ENCODE measurements at regions of chr7 and their contacts with region 1.

Region 1: GRCh38 chr7:87152107-87152844 is at the start of gene DMTF1:
- H3K4me3 Mint-ChIP-seq: peak within 1 kb of the TSS; percentile 98
- H3K27ac Mint-ChIP-seq: peak within 1 kb of the TSS; percentile 100
- H3K4me1 Mint-ChIP-seq: peaks cover 18% of the 10 kb centered on the region
- H3K27me3 Mint-ChIP-seq: no peaks in the 10 kb centered on the region

Region 2: DNA sequence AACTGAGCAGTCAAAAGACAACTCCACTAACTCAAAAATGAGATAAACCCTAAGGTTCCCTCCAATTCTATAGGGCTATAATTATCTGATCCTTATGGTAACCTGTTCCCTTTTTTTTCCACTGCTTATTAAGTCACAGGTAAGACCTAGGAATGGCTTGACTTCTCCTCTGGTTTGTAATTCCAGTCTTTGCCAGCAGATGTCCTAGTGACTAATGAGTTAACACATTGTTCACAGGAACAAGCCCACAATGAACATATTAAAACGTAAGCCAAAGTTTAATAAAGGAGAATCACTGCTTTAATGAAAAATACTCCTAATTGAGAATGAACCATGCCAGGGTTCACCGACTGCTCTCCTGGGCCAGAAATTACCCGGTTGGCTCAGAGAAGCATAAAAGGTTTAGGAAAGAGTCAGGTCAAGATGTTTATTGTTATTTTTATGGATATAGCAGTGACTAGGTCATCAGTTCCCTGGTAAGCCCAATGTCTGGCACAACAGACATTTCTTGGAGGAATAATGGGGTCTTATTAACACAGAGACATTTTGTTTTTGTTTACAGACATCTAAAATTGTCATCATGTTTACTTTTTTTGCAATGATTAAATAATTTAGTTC is 213.0 kb before region 1 on chr7:
- intact Hi-C with region 1: loop called (anchors 1 kb)
- H3K4me3 Mint-ChIP-seq: no peak overlapping the region
- H3K27ac Mint-ChIP-seq: no peak overlapping the region
- H3K4me1 Mint-ChIP-seq: no peaks in the 10 kb centered on the region
- H3K27me3 Mint-ChIP-seq: no peaks in the 10 kb centered on the region

Region 3: GRCh38 chr7:87219545-87220025 is 67.3 kb after region 1 on chr7 and contains the start of gene TMEM243:
- intact Hi-C with region 1: loop called (anchors 1 kb)
- H3K4me3 Mint-ChIP-seq: peak within 1 kb of the TSS; percentile 90
- H3K27ac Mint-ChIP-seq: peak within 1 kb of the TSS; percentile 94
- H3K4me1 Mint-ChIP-seq: peaks cover 30% of the 10 kb centered on the region
- H3K27me3 Mint-ChIP-seq: peaks cover 11% of the 10 kb centered on the region

Region 4: GRCh38 chr7:87345166-87345927 is 193.1 kb after region 1 on chr7 and contains the start of gene CROT:
- intact Hi-C with region 1: loop called (anchors 10 kb)
- H3K4me3 Mint-ChIP-seq: peak within 1 kb of the TSS; percentile 89
- H3K27ac Mint-ChIP-seq: peak within 1 kb of the TSS; percentile 92
- H3K4me1 Mint-ChIP-seq: peaks cover 13% of the 10 kb centered on the region
- H3K27me3 Mint-ChIP-seq: no peaks in the 10 kb centered on the region

Region 5: DNA sequence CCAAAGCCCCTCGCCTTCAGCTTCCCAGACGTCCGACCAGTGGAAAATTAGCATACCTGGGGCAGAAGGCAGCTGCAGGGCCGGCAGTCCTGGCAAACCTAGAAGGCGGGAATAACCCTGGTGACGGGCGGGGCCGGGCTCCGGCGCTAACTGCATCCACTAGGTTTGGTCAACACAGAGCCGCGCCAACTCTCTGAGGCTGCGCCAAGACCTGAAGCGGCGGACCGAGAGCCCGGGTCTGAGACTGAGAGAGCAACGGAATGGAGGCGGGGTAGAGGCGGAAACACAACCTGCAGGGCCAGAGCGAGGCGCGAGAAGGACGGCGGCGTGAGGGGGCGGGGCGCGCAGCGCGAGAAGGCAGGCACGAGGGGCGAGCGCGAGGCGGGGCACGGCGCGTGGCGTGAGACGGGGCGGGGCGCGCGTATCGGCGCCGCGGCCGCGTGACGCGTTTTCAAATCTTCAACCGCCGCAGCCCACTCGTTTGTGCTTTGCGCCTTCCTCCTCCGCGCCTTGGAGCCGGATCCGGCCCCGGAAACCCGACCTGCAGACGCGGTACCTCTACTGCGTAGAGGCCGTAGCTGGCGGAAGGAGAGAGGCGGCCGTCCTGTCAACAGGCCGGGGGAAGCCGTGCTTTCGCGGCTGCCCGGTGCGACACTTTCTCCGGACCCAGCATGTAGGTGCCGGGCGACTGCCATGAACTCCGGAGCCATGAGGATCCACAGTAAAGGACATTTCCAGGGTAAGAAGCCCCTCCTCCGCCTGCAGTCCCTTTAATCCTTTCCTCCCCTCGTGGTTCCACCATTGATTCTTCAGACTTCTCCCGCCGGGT is 724.0 kb after region 1 on chr7 and contains the starts of genes DBF4 and SLC25A40:
- intact Hi-C with region 1: loop called (anchors 5 kb)
- H3K4me3 Mint-ChIP-seq: peak within 1 kb of the TSS; percentile 96
- H3K27ac Mint-ChIP-seq: peak within 1 kb of the TSS; percentile 100
- H3K4me1 Mint-ChIP-seq: peaks cover 41% of the 10 kb centered on the region
- H3K27me3 Mint-ChIP-seq: no peaks in the 10 kb centered on the region

Region 6: DNA sequence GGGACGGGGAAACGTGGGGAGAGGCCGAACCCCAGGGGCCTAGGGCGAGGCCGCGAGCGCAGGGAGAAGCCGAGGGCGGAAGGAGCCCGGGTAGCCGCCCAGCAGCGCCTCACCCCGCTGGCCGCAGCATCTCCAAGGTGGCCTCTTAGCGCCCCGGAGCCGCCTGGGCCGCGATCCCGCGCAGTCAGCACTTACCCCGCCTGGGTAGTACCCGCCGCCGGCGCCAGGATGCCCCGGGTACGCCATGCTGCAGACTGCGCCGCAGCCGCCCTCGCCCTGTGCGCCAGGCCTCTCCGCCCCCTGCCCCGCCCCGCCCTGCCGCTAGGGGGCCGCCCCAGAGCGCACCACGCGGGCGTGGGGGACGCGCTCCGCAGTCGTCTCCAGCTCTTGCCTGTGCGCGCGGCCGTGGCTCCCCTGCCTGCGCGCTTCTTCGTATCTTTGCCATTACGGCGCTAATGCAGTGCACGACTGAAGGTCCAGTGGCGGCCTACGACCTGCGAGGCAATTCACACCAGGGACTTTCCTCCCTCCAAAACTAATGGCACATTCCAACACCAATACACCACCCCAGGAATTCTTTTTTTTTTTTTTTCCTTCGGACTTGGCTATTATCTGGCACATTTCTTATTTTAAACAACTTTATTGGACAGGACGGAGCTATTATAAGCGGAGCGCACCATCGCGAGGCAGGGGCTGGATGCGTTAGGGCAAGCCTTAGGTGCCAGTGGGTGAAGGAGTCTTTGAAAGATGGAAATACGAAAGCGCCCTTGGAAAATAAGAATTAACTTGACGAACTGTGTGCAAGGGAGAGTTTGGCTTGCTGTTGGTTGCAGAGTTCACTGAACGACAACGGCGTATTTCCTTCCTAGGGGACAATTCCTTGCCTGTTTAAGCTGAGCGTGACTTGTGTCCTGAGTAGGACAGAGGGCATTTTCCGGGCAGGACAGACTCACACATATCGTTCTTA is 1067.8 kb after region 1 on chr7 and contains the start of gene SRI:
- intact Hi-C with region 1: loop called (anchors 5 kb)
- H3K4me3 Mint-ChIP-seq: peak within 1 kb of the TSS; percentile 80
- H3K27ac Mint-ChIP-seq: peak within 1 kb of the TSS; percentile 95
- H3K4me1 Mint-ChIP-seq: peaks cover 25% of the 10 kb centered on the region
- H3K27me3 Mint-ChIP-seq: no peaks in the 10 kb centered on the region